ENCODE measurements at regions of chr19 and their contacts with region 1.

Region 1: DNA sequence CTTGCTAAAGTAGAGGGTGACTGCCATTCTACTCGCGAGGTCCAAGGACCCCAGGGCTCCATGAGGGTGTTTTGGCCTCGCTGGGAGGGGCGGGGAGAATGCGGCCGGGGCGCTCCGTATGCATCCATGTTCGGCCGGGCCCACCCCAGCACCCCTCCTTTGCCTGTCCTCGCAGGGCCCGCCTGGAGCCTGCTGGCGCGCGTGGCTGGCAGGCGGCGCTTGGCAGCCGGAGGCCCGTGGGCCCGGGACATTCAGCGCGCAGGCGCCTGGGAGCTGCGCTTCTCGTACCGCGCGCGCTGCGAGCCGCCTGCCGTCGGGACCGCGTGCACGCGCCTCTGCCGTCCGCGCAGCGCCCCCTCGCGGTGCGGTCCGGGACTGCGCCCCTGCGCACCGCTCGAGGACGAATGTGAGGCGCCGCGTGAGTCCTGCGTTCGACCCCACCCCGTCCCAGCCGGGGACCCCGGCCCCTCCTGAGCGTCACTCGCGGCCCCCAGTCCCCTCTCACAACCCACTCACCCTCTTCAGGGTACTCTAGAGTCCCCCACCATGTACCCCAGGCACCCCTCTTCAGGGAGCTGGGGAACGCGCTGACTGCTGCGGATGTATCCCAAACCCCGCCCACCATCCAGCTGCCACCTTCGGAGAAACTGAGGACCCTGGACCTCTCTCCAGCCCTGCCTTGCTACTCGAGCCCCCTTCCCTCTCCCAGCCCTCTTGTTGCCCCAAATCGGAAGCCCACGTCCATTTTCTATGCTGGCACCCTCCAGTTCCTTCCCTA is 4.1 kb downstream of the DLL3 start:
- DNase-seq: peak; percentile 51 to 91 (median 78)
- ATAC-seq: peak; percentile 79
- H3K4me3 ChIP-seq: no peak overlapping the region
- H3K4me3 Mint-ChIP-seq: no peak overlapping the region
- H3K27ac ChIP-seq: no peak overlapping the region
- H3K27ac Mint-ChIP-seq: no peak overlapping the region
- H3K4me1 ChIP-seq: peaks cover 27% of the 10 kb centered on the region
- H3K4me1 Mint-ChIP-seq: peaks cover 26% of the 10 kb centered on the region
- H3K27me3 ChIP-seq: peaks cover 23 to 50% of the 10 kb centered on the region in 2 experiments
- H3K27me3 Mint-ChIP-seq: peaks cover 57% of the 10 kb centered on the region
- CTCF ChIP-seq: peak; percentile 89

Region 2: GRCh38 chr19:39539519-39540332 is 36.9 kb after region 1 on chr19 and contains the start of gene EID2:
- CTCF ChIA-PET with region 1: interaction called, 4 read pairs
- POLR2A ChIA-PET with region 1: no interaction called
- intact Hi-C with region 1: loop called in 1 of 2 experiments (anchors 2 kb)
- DNase-seq: peak; percentile 84 to 97 (median 95)
- ATAC-seq: peak; percentile 91
- H3K4me3 ChIP-seq: peak within 1 kb of the TSS; percentile 81 to 95
- H3K4me3 Mint-ChIP-seq: peak within 1 kb of the TSS; percentile 97
- H3K27ac ChIP-seq: peak within 1 kb of the TSS; percentile 90 to 93
- H3K27ac Mint-ChIP-seq: peak within 1 kb of the TSS; percentile 98
- H3K4me1 ChIP-seq: peaks cover 31% of the 10 kb centered on the region
- H3K4me1 Mint-ChIP-seq: peaks cover 58% of the 10 kb centered on the region
- H3K27me3 ChIP-seq: no peaks in the 10 kb centered on the region
- H3K27me3 Mint-ChIP-seq: no peaks in the 10 kb centered on the region
- CTCF ChIP-seq: peak; percentile 74
- total RNA-seq, gene EID2: 16.3 to 17.7 TPM